Activated naive CD4-positive, alpha-beta T cell treated with anti-CD3 and anti-CD28 coated beads for 36 hours (primary cell): ENCODE measurements at regions of chr11 and their contacts with region 1.

Region 1: GRCh38 chr11:111565114-111565720 is 24.7 kb downstream of the LAYN start:
- DNase-seq: peak; percentile 83
- H3K4me3 Mint-ChIP-seq: no peak overlapping the region
- H3K27ac Mint-ChIP-seq: no peak overlapping the region
- H3K4me1 Mint-ChIP-seq: no peaks in the 10 kb centered on the region
- H3K27me3 Mint-ChIP-seq: peaks cover 2% of the 10 kb centered on the region

Region 2: GRCh38 chr11:111586388-111586831 is 21.2 kb after region 1 on chr11:
- CTCF ChIA-PET with region 1: interaction called, 5 read pairs
- intact Hi-C with region 1: loop called (anchors 2 kb)
- DNase-seq: peak; percentile 69
- H3K4me3 Mint-ChIP-seq: no peak overlapping the region
- H3K27ac Mint-ChIP-seq: no peak overlapping the region
- H3K4me1 Mint-ChIP-seq: no peaks in the 10 kb centered on the region
- H3K27me3 Mint-ChIP-seq: peaks cover 2% of the 10 kb centered on the region

Region 3: DNA sequence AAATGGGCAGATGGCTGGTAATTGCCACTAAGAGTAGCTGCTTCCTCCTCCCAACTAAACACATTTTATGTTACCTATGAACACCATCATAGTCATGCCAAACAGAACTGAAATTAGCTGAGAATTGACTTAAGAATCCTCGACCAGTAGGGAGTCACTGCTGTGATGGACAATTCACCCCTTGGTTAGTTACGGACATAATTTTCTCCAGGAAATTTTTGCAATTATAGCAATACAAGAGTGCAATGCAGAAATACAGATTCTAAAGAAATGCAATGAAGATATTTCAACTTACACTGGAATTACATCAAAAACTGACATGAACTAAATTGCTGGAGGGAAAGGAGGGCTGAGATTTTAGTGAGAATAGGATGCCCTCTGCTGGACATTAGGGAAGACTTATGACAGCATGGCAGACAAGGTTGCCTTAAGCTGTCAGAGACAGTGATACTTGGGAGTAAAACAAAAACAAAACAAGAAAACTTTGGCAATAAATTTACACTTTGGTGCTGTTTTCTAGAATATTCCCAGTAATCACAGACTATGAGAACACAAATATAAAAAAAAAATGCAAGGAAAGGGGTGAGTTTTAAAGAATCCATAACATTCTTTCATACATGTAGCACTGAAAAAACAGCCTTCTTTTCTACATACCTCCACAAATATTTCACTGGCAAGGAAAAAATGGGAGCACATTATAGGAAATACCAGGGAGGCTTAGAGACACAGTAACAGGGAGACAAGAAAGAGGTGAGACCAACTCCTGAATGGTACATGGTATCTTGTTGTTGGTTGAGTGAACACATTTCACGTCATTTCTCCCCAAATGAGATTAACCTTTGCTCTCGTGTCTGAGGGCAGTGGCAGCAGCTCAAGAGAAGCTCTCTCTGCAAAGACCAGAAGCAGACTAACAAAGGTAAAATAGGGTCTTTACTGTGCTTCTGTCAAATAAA is 212.2 kb after region 1 on chr11:
- CTCF ChIA-PET with region 1: interaction called, 16 read pairs
- intact Hi-C with region 1: loop called (anchors 1 kb)
- DNase-seq: peak; percentile 35
- H3K4me3 Mint-ChIP-seq: no peak overlapping the region
- H3K27ac Mint-ChIP-seq: no peak overlapping the region
- H3K4me1 Mint-ChIP-seq: no peaks in the 10 kb centered on the region
- H3K27me3 Mint-ChIP-seq: no peaks in the 10 kb centered on the region

Region 4: DNA sequence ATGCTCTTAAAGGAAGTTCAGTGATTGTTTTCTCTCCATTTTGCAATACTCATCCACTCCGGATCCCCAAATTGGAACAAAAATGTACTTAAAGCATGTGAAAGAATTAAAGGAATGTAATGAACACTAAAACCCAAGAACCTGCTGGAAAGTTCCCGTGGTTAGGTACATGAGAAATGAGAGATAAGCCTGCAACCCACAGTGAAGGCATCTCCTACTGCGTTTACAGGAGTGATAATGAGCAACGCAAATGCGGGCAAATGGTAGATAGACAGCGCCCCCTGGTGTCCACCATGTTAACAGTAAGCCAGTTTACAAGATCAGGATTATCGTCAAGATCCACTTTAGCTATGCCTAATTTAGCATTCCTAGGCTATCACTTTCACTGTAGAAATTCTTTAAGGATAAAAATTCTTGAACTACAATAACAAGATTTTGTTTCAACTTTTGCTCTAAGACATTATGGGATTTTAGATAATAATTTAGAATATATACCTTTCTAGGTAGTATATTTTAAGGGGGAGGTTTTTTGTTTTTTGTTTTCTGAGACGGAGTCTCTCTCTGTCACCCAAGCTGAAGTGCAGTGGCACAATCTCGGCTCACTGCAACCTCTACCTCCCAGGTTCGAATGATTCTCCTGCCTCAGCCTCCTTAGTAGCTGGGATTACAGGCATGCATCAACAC is 276.3 kb after region 1 on chr11:
- CTCF ChIA-PET with region 1: interaction called, 9 read pairs
- intact Hi-C with region 1: loop called (anchors 1 kb)
- DNase-seq: peak; percentile 96
- H3K4me3 Mint-ChIP-seq: no peak overlapping the region
- H3K27ac Mint-ChIP-seq: no peak overlapping the region
- H3K4me1 Mint-ChIP-seq: no peaks in the 10 kb centered on the region
- H3K27me3 Mint-ChIP-seq: no peaks in the 10 kb centered on the region

Region 5: DNA sequence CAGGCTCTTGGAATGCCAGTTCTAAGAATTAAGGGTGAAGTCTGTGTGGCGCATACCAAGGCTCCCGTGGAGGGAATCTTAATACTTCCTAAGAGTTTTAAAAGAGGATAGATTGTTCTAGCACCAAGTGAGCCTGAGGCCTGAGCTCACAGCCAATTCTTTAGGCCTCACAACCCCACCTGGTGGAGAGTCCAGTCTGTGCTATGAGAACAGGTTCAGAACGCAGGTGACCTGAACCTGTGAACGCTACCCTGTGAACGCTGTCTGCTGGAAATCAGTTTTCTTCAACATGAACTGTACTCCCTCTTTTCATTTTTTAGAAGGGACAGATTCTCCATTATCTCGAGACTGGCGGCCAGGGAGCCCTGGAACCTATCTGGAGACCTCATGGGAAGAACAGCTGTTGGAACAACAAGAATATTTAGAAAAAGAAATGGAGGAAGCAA is 416.8 kb after region 1 on chr11:
- CTCF ChIA-PET with region 1: no interaction called
- intact Hi-C with region 1: loop called (anchors 10 kb)
- DNase-seq: peak; percentile 85
- H3K4me3 Mint-ChIP-seq: no peak overlapping the region
- H3K27ac Mint-ChIP-seq: no peak overlapping the region
- H3K4me1 Mint-ChIP-seq: peaks cover 12% of the 10 kb centered on the region
- H3K27me3 Mint-ChIP-seq: peaks cover 26% of the 10 kb centered on the region

Region 6: GRCh38 chr11:112174789-112175598 is 609.8 kb after region 1 on chr11 and contains the start of gene BCO2:
- CTCF ChIA-PET with region 1: no interaction called
- intact Hi-C with region 1: loop called (anchors 10 kb)
- DNase-seq: peak; percentile 60
- H3K4me3 Mint-ChIP-seq: peak within 1 kb of the TSS; percentile 50
- H3K27ac Mint-ChIP-seq: no peak within 1 kb of the TSS
- H3K4me1 Mint-ChIP-seq: peaks cover 13% of the 10 kb centered on the region
- H3K27me3 Mint-ChIP-seq: peaks cover 22% of the 10 kb centered on the region
- total RNA-seq, gene BCO2: 0.30 to 0.45 TPM